ENCODE measurements at regions of chr1 and their contacts with region 1.

Region 1: DNA sequence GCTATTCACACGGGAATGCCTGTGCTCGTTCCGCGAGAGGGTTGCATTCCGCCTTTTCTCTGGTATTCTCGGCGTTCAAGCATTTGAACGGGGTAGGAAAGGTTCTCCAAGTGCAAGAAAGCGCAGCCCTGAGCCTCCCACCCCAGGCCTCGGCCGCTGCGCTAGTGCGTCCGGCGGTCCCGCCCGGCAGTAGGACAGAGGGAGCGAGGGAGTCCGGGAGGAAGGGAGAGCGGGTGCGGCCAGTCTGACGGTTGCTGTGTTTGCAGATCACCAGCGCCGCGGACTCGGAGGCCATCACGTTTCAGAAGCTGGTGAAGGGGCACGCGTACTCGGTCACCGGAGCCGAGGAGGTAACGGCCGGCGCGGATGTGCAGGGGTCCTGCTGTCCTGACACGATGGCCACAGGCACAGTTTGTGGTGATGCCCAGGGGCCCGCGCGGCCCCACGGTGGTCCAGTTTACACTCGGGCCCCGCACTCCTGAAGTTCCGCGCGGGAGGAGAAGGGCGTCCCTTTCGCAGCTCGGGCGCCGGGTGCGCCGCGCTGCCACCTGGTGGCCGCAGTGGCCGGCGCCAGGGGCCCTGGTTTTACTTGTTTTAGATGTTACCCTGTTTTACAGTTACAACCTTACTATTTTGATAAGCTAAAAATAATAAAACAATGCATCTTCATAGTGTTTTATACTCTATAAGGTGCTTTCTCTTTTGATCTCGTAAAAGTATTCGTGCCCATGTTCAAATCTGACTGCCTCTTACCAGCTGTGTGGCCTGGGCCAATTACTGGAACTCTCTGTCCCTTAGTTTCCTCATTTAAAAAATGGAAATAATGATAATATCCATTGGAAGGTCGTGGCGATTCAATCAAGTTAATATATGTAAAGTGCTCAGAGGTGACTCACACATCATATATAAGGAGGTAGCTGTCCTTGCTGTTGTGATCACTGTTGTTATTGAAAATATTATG is 36.7 kb downstream of the CAPN2 start:
- DNase-seq: peak; percentile 94
- H3K4me3 ChIP-seq: peak overlapping the region; percentile 52 to 56 (median 54)
- H3K27ac ChIP-seq: peak overlapping the region; percentile 74 to 82 (median 80)
- H3K4me1 ChIP-seq: peaks cover 22 to 30% (median 25%) of the 10 kb centered on the region in 4 donors
- H3K27me3 ChIP-seq: no peaks in the 10 kb centered on the region
- CTCF ChIP-seq: peak; percentile 94 to 99 (median 97)
- EP300 ChIP-seq: no peak
- POLR2A ChIP-seq: no peak

Region 2: GRCh38 chr1:223712194-223712849 is 36.7 kb before region 1 on chr1 and contains the start of gene CAPN2:
- intact Hi-C with region 1: loop called (anchors 1 kb)
- DNase-seq: no peak
- H3K4me3 ChIP-seq: peak within 1 kb of the TSS; percentile 86 to 92 (median 90)
- H3K27ac ChIP-seq: peak within 1 kb of the TSS; percentile 94 to 98 (median 98)
- H3K4me1 ChIP-seq: peaks cover 63 to 79% (median 73%) of the 10 kb centered on the region in 4 donors
- H3K27me3 ChIP-seq: no peaks in the 10 kb centered on the region
- CTCF ChIP-seq: peak; percentile 84 to 95 (median 87)
- EP300 ChIP-seq: no peak
- POLR2A ChIP-seq: peak; percentile 39
- total RNA-seq, gene CAPN2: 91.9 to 231 (median 161) TPM

Region 3: DNA sequence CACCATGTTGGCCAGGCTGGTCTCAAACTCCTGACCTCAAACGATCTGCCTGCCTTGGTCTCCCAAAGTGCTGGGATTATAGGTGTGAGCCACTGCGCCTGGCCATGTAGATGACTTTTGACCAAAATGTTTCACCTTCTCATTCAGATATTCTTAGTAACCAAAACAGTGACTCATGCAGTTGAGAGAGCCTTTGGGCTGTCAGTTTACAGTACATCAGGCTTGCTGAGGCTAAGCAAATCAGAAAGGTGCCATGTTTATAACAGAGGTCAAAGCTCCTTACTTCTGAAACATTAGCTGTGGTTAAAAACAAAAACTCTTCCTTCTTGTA is 628.6 kb after region 1 on chr1:
- intact Hi-C with region 1: no loop called
- DNase-seq: no peak
- H3K4me3 ChIP-seq: no peak overlapping the region
- H3K27ac ChIP-seq: peak overlapping the region in 3 of 4 donors; percentile 13 to 41 (median 24)
- H3K4me1 ChIP-seq: peaks cover 17 to 34% (median 20%) of the 10 kb centered on the region in 4 donors
- H3K27me3 ChIP-seq: no peaks in the 10 kb centered on the region
- CTCF ChIP-seq: no peak
- EP300 ChIP-seq: no peak
- POLR2A ChIP-seq: no peak